Cardiac septum (tissue), 1 donor: ENCODE measurements at regions of chr10 and their contacts with region 1.

Region 1: GRCh38 chr10:69684020-69684980 is 54.3 kb downstream of the FAM241B start:
- DNase-seq: peak; percentile 65

Region 2: GRCh38 chr10:69327463-69328379 is 356.6 kb before region 1 on chr10:
- intact Hi-C with region 1: loop called (anchors 5 kb)
- DNase-seq: peak; percentile 93

Region 3: GRCh38 chr10:69413221-69413865 is 271.0 kb before region 1 on chr10:
- intact Hi-C with region 1: no loop called
- DNase-seq: no peak

Region 4: GRCh38 chr10:69716711-69717560 is 32.6 kb after region 1 on chr10:
- intact Hi-C with region 1: loop called (anchors 5 kb)
- DNase-seq: no peak

Region 5: GRCh38 chr10:69757553-69758309 is 73.4 kb after region 1 on chr10:
- intact Hi-C with region 1: no loop called
- DNase-seq: peak; percentile 80